GM12878 (cell line): ENCODE measurements at regions of chr3 and their contacts with region 1.

Region 1: DNA sequence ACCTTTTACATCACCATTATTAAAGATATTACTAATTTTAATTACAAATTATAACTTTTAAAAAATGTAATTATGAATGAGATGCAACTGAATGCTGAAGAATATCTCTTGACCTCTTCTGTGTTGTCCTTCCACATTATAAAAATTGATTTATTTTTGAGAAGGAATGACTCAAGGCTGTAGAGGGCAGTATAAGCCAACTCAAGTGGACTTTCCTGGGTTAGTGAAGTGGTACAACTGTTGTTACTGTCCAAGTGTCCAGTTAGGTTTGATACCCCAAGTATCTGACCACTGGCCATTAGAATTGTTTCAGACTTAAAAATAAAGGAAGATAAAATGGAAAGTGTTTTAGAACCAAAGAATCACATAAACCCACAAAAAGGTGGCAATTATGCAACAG is 51.9 kb downstream of the BBX start:
- DNase-seq: no peak
- ATAC-seq: peak; percentile 89
- H3K4me3 ChIP-seq: no peak overlapping the region
- H3K27ac ChIP-seq: no peak overlapping the region
- H3K4me1 ChIP-seq: no peaks in the 10 kb centered on the region
- H3K27me3 ChIP-seq: no peaks in the 10 kb centered on the region
- CTCF ChIP-seq: peak; percentile 45 to 70 (median 47); a peak in 5 of 6 replicates
- EP300 ChIP-seq: no peak
- POLR2A ChIP-seq: no peak
- RAD21 ChIP-seq: peak; percentile 85

Region 2: GRCh38 chr3:107589454-107589853 is 14.8 kb after region 1 on chr3:
- CTCF ChIA-PET with region 1: interaction called, 12 read pairs
- POLR2A ChIA-PET with region 1: no interaction called
- RAD21 ChIA-PET with region 1: interaction called, 4 read pairs
- SMC1A ChIA-PET with region 1: interaction called, 12 read pairs
- in situ Hi-C with region 1: no loop called
- intact Hi-C with region 1: no loop called
- DNase-seq: peak; percentile 55
- ATAC-seq: peak; percentile 93
- H3K4me3 ChIP-seq: no peak overlapping the region
- H3K27ac ChIP-seq: peak overlapping the region; percentile 49; the same call in 1 of the 2 replicates
- H3K4me1 ChIP-seq: peaks cover 7% of the 10 kb centered on the region
- H3K27me3 ChIP-seq: no peaks in the 10 kb centered on the region
- CTCF ChIP-seq: no peak
- EP300 ChIP-seq: no peak
- POLR2A ChIP-seq: no peak
- RAD21 ChIP-seq: no peak

Region 3: DNA sequence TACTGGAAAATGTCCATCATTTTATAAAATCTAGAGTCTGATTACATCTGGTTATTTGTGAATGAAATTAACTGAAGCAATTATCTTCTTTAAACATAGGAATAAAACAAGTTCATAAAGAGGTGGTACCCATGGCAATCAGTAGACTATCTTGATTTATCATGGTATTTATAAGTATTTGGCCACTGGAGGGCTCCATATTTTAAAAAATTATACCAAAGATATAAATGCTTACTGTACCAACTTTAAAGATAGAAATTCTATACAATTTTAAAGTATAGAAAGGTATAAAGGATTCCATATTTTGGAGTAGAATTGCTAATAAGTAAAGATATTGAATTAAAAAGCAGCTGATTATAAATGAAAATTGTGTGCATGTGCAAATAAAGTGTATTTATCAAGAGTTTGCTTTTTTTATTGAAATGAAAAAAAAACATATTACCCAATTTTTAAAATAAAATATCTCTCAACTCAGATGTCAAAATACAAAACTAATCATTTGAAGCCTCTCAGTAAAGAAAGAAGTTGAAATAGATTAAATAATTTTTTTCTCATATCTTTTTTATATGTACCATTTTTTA is 53.4 kb after region 1 on chr3:
- CTCF ChIA-PET with region 1: interaction called, 17 read pairs
- POLR2A ChIA-PET with region 1: interaction called, 3 read pairs
- RAD21 ChIA-PET with region 1: interaction called, 7 read pairs
- SMC1A ChIA-PET with region 1: interaction called, 19 read pairs
- in situ Hi-C with region 1: no loop called
- intact Hi-C with region 1: no loop called
- DNase-seq: no peak
- ATAC-seq: peak; percentile 46; the same call in 1 of the 3 replicates
- H3K4me3 ChIP-seq: no peak overlapping the region
- H3K27ac ChIP-seq: no peak overlapping the region
- H3K4me1 ChIP-seq: peaks cover 10% of the 10 kb centered on the region
- H3K27me3 ChIP-seq: no peaks in the 10 kb centered on the region
- CTCF ChIP-seq: peak in 1 of 3 experiments; percentile 16; a peak in 2 of 6 replicates
- EP300 ChIP-seq: no peak
- POLR2A ChIP-seq: no peak
- RAD21 ChIP-seq: no peak

Region 4: DNA sequence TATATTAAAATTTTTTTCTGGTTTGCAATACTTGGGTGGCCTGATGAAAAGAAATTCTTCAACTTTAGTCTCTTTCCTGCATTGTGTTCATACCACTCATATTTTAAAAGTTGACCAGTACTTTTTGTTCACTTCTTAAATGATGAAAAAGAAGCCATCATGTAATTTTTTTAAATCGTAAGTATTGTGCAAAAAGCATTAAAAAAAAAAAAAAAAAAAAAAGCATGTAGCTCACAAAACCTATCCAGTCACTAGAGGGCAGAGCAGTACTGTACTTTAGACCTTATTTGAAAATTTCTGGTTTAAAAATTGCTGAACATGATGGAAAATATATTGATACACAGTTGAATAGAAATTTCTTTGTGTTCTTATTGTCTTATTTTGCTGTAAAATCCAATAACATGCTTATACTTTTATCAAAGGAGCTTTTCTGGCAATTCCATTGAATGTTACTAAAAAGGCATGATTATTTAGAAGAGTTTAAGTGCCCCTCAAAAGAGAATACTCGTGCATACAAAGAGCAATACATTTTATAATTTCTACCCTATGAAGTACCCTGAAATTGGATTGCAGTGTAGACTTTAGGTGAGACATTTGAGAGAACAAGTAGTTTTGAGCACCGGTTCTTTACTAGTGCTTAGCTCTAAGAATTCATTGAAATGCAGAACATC is 85.8 kb after region 1 on chr3:
- CTCF ChIA-PET with region 1: interaction called, 36 read pairs
- POLR2A ChIA-PET with region 1: no interaction called
- RAD21 ChIA-PET with region 1: interaction called, 13 read pairs
- SMC1A ChIA-PET with region 1: interaction called, 9 read pairs
- in situ Hi-C with region 1: no loop called
- intact Hi-C with region 1: loop called (anchors 2 kb)
- DNase-seq: no peak
- ATAC-seq: peak; percentile 61
- H3K4me3 ChIP-seq: no peak overlapping the region
- H3K27ac ChIP-seq: no peak overlapping the region
- H3K4me1 ChIP-seq: peaks cover 13% of the 10 kb centered on the region
- H3K27me3 ChIP-seq: no peaks in the 10 kb centered on the region
- CTCF ChIP-seq: peak; percentile 49 to 61 (median 57); a peak in 5 of 6 replicates
- EP300 ChIP-seq: no peak
- POLR2A ChIP-seq: no peak
- RAD21 ChIP-seq: peak; percentile 66

Region 5: GRCh38 chr3:107753480-107753879 is 178.8 kb after region 1 on chr3:
- CTCF ChIA-PET with region 1: interaction called, 22 read pairs
- POLR2A ChIA-PET with region 1: no interaction called
- RAD21 ChIA-PET with region 1: no interaction called
- SMC1A ChIA-PET with region 1: interaction called, 5 read pairs
- in situ Hi-C with region 1: no loop called
- intact Hi-C with region 1: no loop called
- DNase-seq: no peak
- ATAC-seq: peak; percentile 70
- H3K4me3 ChIP-seq: no peak overlapping the region
- H3K27ac ChIP-seq: no peak overlapping the region
- H3K4me1 ChIP-seq: no peaks in the 10 kb centered on the region
- H3K27me3 ChIP-seq: no peaks in the 10 kb centered on the region
- CTCF ChIP-seq: peak; percentile 41 to 45 (median 44); a peak in 5 of 6 replicates
- EP300 ChIP-seq: no peak
- POLR2A ChIP-seq: no peak
- RAD21 ChIP-seq: peak; percentile 36; the same call in 1 of the 2 replicates